ENCODE measurements at regions of chr6 and their contacts with region 1.

Region 1: DNA sequence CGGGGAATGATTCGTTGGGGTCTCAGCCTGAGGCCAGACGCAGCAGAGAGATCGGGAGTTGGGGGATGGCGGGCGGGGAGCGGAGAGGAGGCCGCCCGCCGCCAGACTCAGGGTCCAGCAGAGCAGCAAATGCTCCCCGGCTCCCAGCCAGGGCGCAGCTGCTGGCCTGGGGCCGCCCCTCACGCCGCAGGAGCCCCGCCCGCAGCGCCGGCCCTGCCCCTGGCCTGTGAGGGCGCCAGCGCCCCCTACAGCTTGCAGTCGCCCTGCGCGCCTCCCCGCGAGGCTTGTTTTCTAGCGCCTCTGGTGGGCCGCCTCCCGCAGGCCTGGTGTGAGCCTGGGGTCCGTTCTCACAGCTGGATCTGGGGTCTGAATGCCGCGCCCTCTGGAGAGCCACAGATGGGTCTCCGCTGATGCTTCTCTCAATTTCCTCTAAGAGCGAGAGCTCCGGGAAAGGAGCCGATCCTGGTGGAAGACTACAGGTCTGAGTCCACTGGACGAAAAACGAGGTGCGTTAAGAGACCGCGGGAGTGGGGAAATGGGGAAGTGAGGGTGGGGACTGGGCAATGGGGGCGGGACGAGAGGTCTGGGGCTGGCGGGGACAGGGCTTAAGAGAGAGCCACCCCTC is 29.9 kb downstream of the TRIM38 start:
- DNase-seq: peak; percentile 73
- ATAC-seq: peak; percentile 91
- H3K4me3 ChIP-seq: peak overlapping the region; percentile 75
- H3K27ac ChIP-seq: peak overlapping the region; percentile 85
- H3K4me1 ChIP-seq: peaks cover 9% of the 10 kb centered on the region
- H3K27me3 ChIP-seq: no peaks in the 10 kb centered on the region
- CTCF ChIP-seq: peak; percentile 98 to 100 (median 100); a peak in 5 of 6 replicates
- EP300 ChIP-seq: 0 out of 4 replicates have a peak, but pooled peaks of 1 of the 2 experiments have one; percentile 14
- POLR2A ChIP-seq: peak; percentile 93
- RAD21 ChIP-seq: peak; percentile 76

Region 2: DNA sequence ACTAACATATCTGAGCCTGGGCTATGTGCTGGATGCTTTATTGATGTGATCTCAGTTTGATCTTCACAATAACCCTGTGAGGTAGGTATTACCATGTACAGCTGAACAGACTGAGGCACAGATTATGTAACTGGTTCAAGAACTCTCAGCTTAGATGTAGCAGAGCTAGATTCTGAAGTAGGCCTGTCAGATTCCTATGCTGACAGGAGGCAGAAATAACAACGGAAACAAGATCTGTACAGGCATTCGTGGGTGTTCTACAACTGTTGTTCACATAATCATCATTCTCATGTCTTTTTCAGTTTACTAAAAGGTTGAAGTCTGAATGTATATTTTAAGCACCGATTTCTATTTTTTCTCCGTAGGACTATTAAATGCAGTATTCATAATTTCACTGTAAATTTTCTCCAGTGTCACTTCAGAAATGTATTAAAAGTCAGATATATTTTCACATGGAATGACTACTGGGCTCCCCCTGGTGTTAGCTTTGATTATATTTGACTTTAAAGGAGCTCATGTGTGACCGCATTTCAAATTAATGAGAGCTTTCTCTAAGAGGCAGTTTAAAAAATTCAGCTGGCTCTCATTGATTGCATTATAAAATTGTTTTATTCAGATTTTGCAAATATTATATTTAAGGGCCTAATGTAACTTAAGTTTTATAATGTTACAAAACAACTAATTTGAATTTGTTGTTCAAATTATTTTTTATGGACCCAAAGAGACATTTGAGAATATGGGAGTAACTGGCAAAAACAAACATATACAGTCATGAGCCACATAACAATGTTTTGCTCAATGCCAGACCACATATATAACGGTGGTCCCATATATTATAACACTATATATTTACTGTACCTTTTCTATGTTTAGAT is 274.4 kb before region 1 on chr6:
- CTCF ChIA-PET with region 1: interaction called, 21 read pairs
- POLR2A ChIA-PET with region 1: no interaction called
- RAD21 ChIA-PET with region 1: interaction called, 3 read pairs
- SMC1A ChIA-PET with region 1: interaction called, 5 read pairs
- in situ Hi-C with region 1: no loop called
- intact Hi-C with region 1: loop called (anchors 5 kb)
- DNase-seq: no peak
- ATAC-seq: 0 out of 3 replicates have a peak, but pooled peaks have one; percentile 34
- H3K4me3 ChIP-seq: no peak overlapping the region
- H3K27ac ChIP-seq: no peak overlapping the region
- H3K4me1 ChIP-seq: no peaks in the 10 kb centered on the region
- H3K27me3 ChIP-seq: peaks cover 0 to 3% of the 10 kb centered on the region in 2 experiments; a peak in 1 of 4 replicates
- CTCF ChIP-seq: peak; percentile 42 to 48 (median 47)
- EP300 ChIP-seq: no peak
- POLR2A ChIP-seq: no peak
- RAD21 ChIP-seq: 0 out of 2 replicates have a peak, but pooled peaks have one; percentile 32

Region 3: DNA sequence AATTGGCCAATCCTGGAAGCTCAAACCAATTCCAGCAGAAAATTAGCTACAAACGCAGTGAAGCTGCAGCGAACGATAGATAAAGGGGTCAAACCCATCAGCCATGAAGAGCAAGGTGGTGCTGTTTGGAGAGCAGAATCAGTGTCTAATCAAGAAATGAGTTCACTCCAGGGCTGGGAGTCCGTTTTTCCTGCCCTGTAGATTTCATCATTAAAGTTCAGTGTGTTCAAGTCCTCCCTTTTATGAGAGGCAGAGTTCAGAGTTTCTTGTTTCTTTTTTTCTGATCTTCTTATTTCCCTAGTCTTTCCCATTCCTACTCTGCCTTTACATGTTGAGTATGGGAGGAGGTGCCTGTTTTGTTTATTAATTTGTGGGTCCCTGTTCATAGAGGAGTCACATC is 191.1 kb before region 1 on chr6:
- CTCF ChIA-PET with region 1: no interaction called
- POLR2A ChIA-PET with region 1: no interaction called
- RAD21 ChIA-PET with region 1: no interaction called
- SMC1A ChIA-PET with region 1: no interaction called
- in situ Hi-C with region 1: no loop called
- intact Hi-C with region 1: no loop called
- DNase-seq: no peak
- ATAC-seq: no peak
- H3K4me3 ChIP-seq: no peak overlapping the region
- H3K27ac ChIP-seq: no peak overlapping the region
- H3K4me1 ChIP-seq: no peaks in the 10 kb centered on the region
- H3K27me3 ChIP-seq: peaks cover 0 to 4% of the 10 kb centered on the region in 2 experiments; a peak in 2 of 4 replicates
- CTCF ChIP-seq: no peak
- EP300 ChIP-seq: no peak
- POLR2A ChIP-seq: no peak
- RAD21 ChIP-seq: no peak

Region 4: GRCh38 chr6:25942561-25943147 is 49.9 kb before region 1 on chr6:
- CTCF ChIA-PET with region 1: interaction called, 28 read pairs
- POLR2A ChIA-PET with region 1: no interaction called
- RAD21 ChIA-PET with region 1: interaction called, 10 read pairs
- SMC1A ChIA-PET with region 1: interaction called, 6 read pairs
- in situ Hi-C with region 1: no loop called
- intact Hi-C with region 1: loop called (anchors 1 kb)
- DNase-seq: no peak
- ATAC-seq: peak; percentile 82
- H3K4me3 ChIP-seq: no peak overlapping the region
- H3K27ac ChIP-seq: no peak overlapping the region
- H3K4me1 ChIP-seq: no peaks in the 10 kb centered on the region
- H3K27me3 ChIP-seq: no peaks in the 10 kb centered on the region
- CTCF ChIP-seq: peak; percentile 53 to 82 (median 62); a peak in 5 of 6 replicates
- EP300 ChIP-seq: no peak
- POLR2A ChIP-seq: no peak
- RAD21 ChIP-seq: peak; percentile 86

Region 5: GRCh38 chr6:25971187-25971811 is 21.2 kb before region 1 on chr6:
- CTCF ChIA-PET with region 1: interaction called, 58 read pairs
- POLR2A ChIA-PET with region 1: interaction called, 7 read pairs
- RAD21 ChIA-PET with region 1: interaction called, 39 read pairs
- SMC1A ChIA-PET with region 1: interaction called, 24 read pairs
- in situ Hi-C with region 1: no loop called
- intact Hi-C with region 1: no loop called
- DNase-seq: no peak
- ATAC-seq: peak; percentile 19
- H3K4me3 ChIP-seq: 0 out of 2 replicates have a peak overlapping the region, but pooled peaks have one; percentile 13
- H3K27ac ChIP-seq: no peak overlapping the region; the same call in 1 of the 2 replicates
- H3K4me1 ChIP-seq: peaks cover 23% of the 10 kb centered on the region
- H3K27me3 ChIP-seq: no peaks in the 10 kb centered on the region
- CTCF ChIP-seq: no peak
- EP300 ChIP-seq: no peak
- POLR2A ChIP-seq: no peak
- RAD21 ChIP-seq: no peak

Region 6: DNA sequence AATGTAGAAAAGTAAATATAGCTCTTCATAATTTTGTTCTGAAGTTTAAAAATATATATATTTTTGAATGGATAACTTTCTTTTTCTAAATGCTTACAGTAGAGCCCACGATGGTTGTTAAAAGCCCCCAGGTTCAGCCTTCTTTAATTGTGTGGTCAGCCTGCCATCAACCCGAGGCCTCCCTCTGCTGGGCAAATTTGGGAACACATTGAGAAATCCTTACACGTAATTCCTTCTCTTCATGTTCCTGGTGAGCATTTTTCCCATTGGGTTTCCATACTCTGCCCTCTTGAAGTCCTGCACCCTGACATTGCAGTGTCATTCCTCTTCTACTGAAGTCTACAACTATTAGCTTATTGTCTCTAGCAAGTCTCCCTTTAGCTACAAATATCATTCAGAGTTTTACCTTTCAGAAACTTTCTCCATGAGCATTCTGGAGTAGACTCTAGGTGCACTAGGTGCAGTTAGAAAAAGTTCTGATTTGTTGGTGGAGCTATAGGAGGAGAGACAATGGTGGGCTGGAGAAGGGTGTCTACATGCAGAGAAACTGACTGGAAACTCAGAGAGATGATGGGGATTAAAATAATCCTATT is 10.7 kb after region 1 on chr6:
- CTCF ChIA-PET with region 1: interaction called, 112 read pairs
- POLR2A ChIA-PET with region 1: interaction called, 10 read pairs
- RAD21 ChIA-PET with region 1: interaction called, 25 read pairs
- SMC1A ChIA-PET with region 1: interaction called, 76 read pairs
- in situ Hi-C with region 1: no loop called
- intact Hi-C with region 1: no loop called
- DNase-seq: no peak
- ATAC-seq: peak; percentile 65
- H3K4me3 ChIP-seq: no peak overlapping the region
- H3K27ac ChIP-seq: no peak overlapping the region
- H3K4me1 ChIP-seq: no peaks in the 10 kb centered on the region
- H3K27me3 ChIP-seq: no peaks in the 10 kb centered on the region
- CTCF ChIP-seq: peak; percentile 70 to 79 (median 71)
- EP300 ChIP-seq: no peak
- POLR2A ChIP-seq: no peak
- RAD21 ChIP-seq: peak; percentile 84

Region 7: GRCh38 chr6:26020329-26021000 is 27.9 kb after region 1 on chr6:
- CTCF ChIA-PET with region 1: interaction called, 26 read pairs
- POLR2A ChIA-PET with region 1: interaction called, 34 read pairs
- RAD21 ChIA-PET with region 1: interaction called, 53 read pairs
- SMC1A ChIA-PET with region 1: interaction called, 25 read pairs
- in situ Hi-C with region 1: no loop called
- intact Hi-C with region 1: loop called (anchors 1 kb)
- DNase-seq: peak; percentile 93
- ATAC-seq: peak; percentile 69
- H3K4me3 ChIP-seq: peak overlapping the region; percentile 74
- H3K27ac ChIP-seq: peak overlapping the region; percentile 98
- H3K4me1 ChIP-seq: peaks cover 8% of the 10 kb centered on the region
- H3K27me3 ChIP-seq: no peaks in the 10 kb centered on the region
- CTCF ChIP-seq: no peak
- EP300 ChIP-seq: peak in 1 of 2 experiments; percentile 19; a peak in 1 of 4 replicates
- POLR2A ChIP-seq: peak; percentile 98
- RAD21 ChIP-seq: no peak

Measured in GM12878 (cell line).